SK-MEL-5 (cell line): ENCODE measurements at regions of chr9 and their contacts with region 1.

Region 1: GRCh38 chr9:77456829-77457437 is 191.2 kb downstream of the GNA14 start:
- DNase-seq: peak; percentile 92

Region 2: DNA sequence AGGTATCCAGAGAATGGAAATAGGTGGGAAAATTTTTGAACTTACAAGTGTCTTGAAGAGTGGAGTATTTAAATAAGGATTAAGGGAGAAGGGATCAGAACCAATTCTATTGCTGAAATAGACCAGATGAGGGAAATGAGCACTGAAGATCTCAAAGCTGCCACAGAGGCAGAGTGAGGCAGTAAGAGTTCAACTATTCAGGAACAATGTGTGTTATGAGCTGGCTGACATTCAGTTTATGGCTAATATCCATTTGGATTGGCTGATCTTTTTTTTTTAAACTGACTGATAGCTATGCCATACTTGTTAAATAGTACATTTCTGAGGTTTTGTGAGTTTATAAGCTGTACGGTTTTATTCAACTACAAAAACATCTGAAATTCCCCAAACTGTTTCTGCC is 286.5 kb after region 1 on chr9:
- in situ Hi-C with region 1: loop called (anchors 10 kb)
- DNase-seq: no peak